ENCODE measurements at regions of chr10 and their contacts with region 1.

Region 1: GRCh38 chr10:73940634-73941221 is 29.8 kb downstream of the PLAU start:
- DNase-seq: no peak
- H3K4me3 ChIP-seq: peak overlapping the region in 3 of 4 donors; percentile 13 to 39 (median 19)
- H3K27ac ChIP-seq: peak overlapping the region; percentile 68 to 78 (median 72)
- H3K4me1 ChIP-seq: peaks cover 5 to 51% (median 34%) of the 10 kb centered on the region in 3 donors
- H3K27me3 ChIP-seq: no peaks in the 10 kb centered on the region
- CTCF ChIP-seq: peak; percentile 73 to 98 (median 91)
- POLR2A ChIP-seq: no peak

Region 2: DNA sequence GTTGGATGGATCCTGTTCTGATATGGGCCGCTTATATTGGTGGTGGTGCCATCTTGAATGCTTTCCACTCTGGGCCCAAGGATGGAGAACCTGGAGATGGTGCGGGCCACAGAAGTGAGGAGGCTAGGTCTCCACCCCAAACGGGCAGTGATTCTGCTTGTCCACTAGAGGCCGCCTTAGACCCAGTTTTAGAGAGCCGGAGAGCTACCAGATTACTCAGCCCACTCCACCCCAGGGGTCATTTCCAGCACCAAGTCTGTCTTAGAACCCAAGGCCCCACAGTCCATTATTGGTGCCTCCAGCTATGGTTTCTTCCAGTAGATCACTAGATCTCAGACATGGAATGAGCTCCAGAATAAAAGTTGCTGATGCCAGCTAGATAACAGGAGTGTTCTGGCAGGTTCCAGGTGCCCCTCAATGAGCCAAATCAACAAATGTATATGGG is 54.6 kb before region 1 on chr10:
- intact Hi-C with region 1: loop called (anchors 2 kb)
- DNase-seq: no peak
- H3K4me3 ChIP-seq: no peak overlapping the region
- H3K27ac ChIP-seq: peak overlapping the region; percentile 92 to 96 (median 94)
- H3K4me1 ChIP-seq: peaks cover 28 to 53% (median 36%) of the 10 kb centered on the region in 3 donors
- H3K27me3 ChIP-seq: no peaks in the 10 kb centered on the region
- CTCF ChIP-seq: peak; percentile 78 to 92 (median 90)
- POLR2A ChIP-seq: no peak

Measured in esophagus squamous epithelium (tissue), 5 donors.